ENCODE measurements at regions of chr18 and their contacts with region 1.

Region 1: GRCh38 chr18:10560450-10561045 is 34.7 kb downstream of the NAPG start:
- DNase-seq: peak; percentile 71
- ATAC-seq: peak; percentile 50
- H3K4me3 ChIP-seq: peak overlapping the region in 3 of 5 experiments; percentile 19 to 46 (median 41)
- H3K4me3 Mint-ChIP-seq: peak overlapping the region; percentile 70
- H3K27ac ChIP-seq: no peak overlapping the region
- H3K27ac Mint-ChIP-seq: no peak overlapping the region
- H3K4me1 ChIP-seq: peaks cover 6 to 10% of the 10 kb centered on the region in 2 donors
- H3K4me1 Mint-ChIP-seq: peaks cover 10% of the 10 kb centered on the region
- H3K27me3 ChIP-seq: no peaks in the 10 kb centered on the region
- H3K27me3 Mint-ChIP-seq: no peaks in the 10 kb centered on the region
- CTCF ChIP-seq: peak; percentile 85

Region 2: GRCh38 chr18:10713409-10713808 is 152.9 kb after region 1 on chr18:
- CTCF ChIA-PET with region 1: interaction called, 3 read pairs
- POLR2A ChIA-PET with region 1: no interaction called
- intact Hi-C with region 1: loop called (anchors 5 kb)
- DNase-seq: no peak
- ATAC-seq: no peak
- H3K4me3 ChIP-seq: no peak overlapping the region
- H3K4me3 Mint-ChIP-seq: no peak overlapping the region
- H3K27ac ChIP-seq: no peak overlapping the region
- H3K27ac Mint-ChIP-seq: no peak overlapping the region
- H3K4me1 ChIP-seq: no peaks in the 10 kb centered on the region
- H3K4me1 Mint-ChIP-seq: no peaks in the 10 kb centered on the region
- H3K27me3 ChIP-seq: no peaks in the 10 kb centered on the region
- H3K27me3 Mint-ChIP-seq: no peaks in the 10 kb centered on the region
- CTCF ChIP-seq: no peak

Region 3: DNA sequence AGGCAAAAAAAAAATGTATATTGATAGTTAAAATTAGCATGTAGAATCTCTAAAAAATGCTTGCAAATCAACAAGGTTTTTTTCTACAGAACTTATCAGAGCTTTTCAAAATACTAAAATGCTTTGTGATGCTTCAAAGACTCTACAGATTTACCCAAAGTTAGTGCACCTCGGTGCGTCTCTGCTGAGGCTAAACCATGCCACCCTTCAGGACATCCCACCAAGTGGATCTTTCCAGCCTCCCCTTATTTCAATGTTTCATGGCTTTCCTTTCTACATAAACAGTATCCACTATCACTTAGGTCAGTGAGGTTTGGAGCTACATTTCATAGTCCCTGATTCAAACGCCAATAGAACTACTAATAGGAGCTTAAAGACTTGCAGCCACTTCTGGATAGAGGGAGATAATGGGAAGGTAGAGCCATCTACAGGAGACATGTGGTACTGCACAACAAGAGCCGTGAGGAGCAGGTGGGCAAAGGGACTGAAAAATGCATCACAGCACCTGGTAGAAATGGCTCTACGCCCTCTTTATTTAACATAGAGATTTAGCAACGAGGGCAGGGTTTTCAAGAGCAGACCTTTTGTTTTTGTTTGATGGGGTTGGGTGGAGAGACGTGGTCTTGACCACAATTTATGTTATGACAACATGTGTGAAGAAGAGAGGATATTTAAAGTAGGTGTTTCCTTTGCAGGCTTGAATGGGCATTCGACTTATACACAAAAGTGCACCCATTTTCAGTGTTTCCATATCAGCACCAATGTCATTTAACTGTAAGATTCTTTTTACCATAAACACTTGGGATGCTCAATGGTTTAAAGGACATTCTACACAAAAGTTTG is 992.8 kb after region 1 on chr18:
- CTCF ChIA-PET with region 1: interaction called, 8 read pairs
- POLR2A ChIA-PET with region 1: no interaction called
- intact Hi-C with region 1: loop called (anchors 10 kb)
- DNase-seq: peak; percentile 56
- ATAC-seq: peak; percentile 58
- H3K4me3 ChIP-seq: no peak overlapping the region
- H3K4me3 Mint-ChIP-seq: no peak overlapping the region
- H3K27ac ChIP-seq: no peak overlapping the region
- H3K27ac Mint-ChIP-seq: no peak overlapping the region
- H3K4me1 ChIP-seq: no peaks in the 10 kb centered on the region
- H3K4me1 Mint-ChIP-seq: peaks cover 4% of the 10 kb centered on the region
- H3K27me3 ChIP-seq: no peaks in the 10 kb centered on the region
- H3K27me3 Mint-ChIP-seq: peaks cover 5% of the 10 kb centered on the region
- CTCF ChIP-seq: peak; percentile 95

Measured in B cell (primary cell).